Right ventricle myocardium superior (tissue), 1 donor: ENCODE measurements at regions of chr3 and their contacts with region 1.

Region 1: DNA sequence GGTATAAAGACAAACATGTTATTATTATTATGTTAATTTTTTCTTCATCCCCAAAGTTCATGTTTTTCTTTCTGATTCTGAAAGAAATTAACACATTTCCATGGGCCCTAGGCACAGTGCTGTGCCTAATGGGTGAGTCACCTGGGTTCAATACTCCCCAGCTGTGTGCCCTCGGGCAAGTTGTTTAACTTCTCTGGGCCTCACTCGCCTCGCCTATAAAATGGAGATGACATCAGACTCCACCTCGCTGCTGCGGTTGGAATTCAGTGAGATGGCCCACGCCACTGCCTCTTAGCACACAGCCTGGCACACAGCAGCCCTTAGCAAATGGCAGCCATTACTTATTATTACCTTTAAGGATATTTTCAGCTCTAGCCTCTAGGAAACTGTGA is 22.6 kb downstream of the DNASE1L3 start:
- DNase-seq: no peak
- ATAC-seq: no peak

Region 2: GRCh38 chr3:57919987-57920386 is 268.2 kb before region 1 on chr3:
- intact Hi-C with region 1: no loop called
- DNase-seq: no peak
- ATAC-seq: no peak

Region 3: GRCh38 chr3:58129041-58129770 is 59.0 kb before region 1 on chr3:
- intact Hi-C with region 1: no loop called
- DNase-seq: no peak
- ATAC-seq: no peak

Region 4: GRCh38 chr3:58299839-58300516 is 111.8 kb after region 1 on chr3:
- intact Hi-C with region 1: loop called (anchors 2 kb)
- DNase-seq: no peak
- ATAC-seq: no peak

Region 5: DNA sequence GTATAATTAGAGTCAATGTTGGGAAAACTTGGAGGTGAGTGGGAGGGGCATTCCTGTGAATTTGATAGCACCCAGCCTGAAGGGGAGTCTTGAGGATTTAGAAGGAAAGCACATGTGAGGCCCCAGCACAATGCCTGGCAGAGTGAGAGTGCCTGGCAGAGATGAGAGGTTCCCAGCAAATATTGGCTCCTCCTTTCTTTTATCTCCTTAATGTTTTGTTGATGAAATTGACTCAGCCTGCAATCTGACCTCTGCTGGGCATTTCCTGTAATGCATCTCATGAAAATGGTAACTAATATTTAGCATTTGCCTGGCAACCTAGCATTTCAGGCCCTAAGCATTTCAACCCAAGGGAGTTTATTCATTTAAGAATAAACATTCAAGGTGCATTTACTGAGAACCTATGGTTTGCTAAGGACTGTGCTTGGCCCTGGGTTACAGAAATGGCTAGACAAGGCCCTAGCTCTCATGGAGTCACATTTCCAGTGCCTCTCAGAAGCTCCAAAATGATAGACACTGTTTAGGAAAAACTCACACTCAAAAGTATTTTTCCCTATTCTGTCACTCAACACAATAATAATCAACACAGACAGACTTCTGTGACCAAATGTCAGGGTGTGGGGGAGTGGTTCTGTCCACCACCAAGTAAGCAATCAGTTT is 226.5 kb after region 1 on chr3:
- intact Hi-C with region 1: loop called (anchors 5 kb)
- DNase-seq: no peak
- ATAC-seq: peak; percentile 80

Region 6: GRCh38 chr3:58526515-58526957 is 338.4 kb after region 1 on chr3:
- intact Hi-C with region 1: loop called (anchors 10 kb)
- DNase-seq: no peak
- ATAC-seq: no peak